ENCODE measurements at regions of chr11 and their contacts with region 1.

Region 1: DNA sequence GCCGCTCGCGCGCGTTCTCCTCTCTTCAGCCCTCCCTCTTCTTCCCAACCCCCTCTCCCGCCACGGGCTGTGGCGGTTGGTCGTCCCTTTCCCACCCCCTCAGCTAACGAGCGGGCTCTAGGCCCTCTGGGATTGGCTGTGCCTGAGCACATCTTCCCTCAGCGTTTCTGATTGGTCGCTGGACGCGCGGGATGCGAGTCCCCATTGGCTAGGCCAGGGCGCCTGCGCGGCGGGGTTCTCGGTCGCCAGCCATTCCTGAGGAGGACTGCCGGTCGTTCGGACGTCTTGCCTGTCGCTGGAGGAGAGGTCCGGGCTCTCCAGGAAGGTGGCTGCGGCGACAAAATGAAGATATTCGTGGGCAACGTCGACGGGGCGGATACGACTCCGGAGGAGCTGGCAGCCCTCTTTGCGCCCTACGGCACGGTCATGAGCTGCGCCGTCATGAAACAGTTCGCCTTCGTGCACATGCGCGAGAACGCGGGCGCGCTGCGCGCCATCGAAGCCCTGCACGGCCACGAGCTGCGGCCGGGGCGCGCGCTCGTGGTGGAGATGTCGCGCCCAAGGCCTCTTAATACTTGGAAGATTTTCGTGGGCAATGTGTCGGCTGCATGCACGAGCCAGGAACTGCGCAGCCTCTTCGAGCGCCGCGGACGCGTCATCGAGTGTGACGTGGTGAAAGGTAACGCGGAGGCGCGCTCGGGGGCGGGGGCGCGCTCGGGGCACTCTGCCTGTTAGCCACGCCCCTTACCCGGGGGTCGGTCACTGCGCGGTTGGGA is at the start of gene RBM14:
- DNase-seq: peak; percentile 99
- H3K4me3 Mint-ChIP-seq: peak within 1 kb of the TSS; percentile 98
- H3K27ac Mint-ChIP-seq: peak within 1 kb of the TSS; percentile 98
- H3K4me1 Mint-ChIP-seq: peaks cover 36% of the 10 kb centered on the region
- H3K27me3 Mint-ChIP-seq: no peaks in the 10 kb centered on the region
- total RNA-seq, gene RBM14: 160 to 173 TPM

Region 2: DNA sequence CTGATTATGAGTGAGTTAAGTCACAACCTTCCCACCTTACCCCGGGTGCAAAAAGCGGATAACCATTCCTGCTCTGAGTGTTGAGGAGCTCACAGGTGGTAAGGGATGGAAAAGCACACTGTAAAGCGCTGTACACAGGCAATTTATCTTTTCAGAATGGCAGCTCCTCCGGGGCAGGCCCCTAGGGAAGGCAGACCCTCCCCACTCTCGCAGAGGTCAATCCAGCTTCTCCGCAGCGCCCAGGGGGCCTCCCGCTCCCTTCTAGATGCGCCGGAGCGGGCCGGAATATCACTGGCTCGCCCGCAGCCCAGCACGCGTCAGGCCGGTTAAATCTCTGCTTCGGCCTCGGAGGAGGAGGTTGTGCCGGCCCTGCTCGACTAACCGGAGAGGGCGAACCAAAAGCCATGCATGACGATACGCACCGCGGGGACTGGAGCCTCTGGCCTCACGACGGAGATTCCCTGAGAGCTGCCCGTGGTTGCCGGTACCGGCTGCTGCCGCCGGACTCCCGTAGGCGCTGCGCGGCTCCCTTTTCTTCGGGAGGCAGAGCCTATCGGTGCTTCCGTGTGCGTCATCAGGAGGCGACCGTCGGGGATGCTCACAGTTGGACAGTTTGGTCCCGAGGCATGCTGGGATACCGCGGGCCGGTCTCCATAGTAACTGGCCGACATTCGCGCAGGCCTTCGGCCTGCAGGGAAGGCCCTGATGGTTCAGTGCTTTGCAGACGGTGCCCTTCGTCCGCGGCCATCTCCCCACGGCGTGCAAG is 271.8 kb before region 1 on chr11 and contains the start of gene BRMS1:
- CTCF ChIA-PET with region 1: no interaction called
- intact Hi-C with region 1: loop called (anchors 5 kb)
- DNase-seq: peak; percentile 99
- H3K4me3 Mint-ChIP-seq: peak within 1 kb of the TSS; percentile 93
- H3K27ac Mint-ChIP-seq: peak within 1 kb of the TSS; percentile 85
- H3K4me1 Mint-ChIP-seq: peaks cover 42% of the 10 kb centered on the region
- H3K27me3 Mint-ChIP-seq: peaks cover 3% of the 10 kb centered on the region
- total RNA-seq, gene BRMS1: 24.0 to 25.3 TPM

Region 3: DNA sequence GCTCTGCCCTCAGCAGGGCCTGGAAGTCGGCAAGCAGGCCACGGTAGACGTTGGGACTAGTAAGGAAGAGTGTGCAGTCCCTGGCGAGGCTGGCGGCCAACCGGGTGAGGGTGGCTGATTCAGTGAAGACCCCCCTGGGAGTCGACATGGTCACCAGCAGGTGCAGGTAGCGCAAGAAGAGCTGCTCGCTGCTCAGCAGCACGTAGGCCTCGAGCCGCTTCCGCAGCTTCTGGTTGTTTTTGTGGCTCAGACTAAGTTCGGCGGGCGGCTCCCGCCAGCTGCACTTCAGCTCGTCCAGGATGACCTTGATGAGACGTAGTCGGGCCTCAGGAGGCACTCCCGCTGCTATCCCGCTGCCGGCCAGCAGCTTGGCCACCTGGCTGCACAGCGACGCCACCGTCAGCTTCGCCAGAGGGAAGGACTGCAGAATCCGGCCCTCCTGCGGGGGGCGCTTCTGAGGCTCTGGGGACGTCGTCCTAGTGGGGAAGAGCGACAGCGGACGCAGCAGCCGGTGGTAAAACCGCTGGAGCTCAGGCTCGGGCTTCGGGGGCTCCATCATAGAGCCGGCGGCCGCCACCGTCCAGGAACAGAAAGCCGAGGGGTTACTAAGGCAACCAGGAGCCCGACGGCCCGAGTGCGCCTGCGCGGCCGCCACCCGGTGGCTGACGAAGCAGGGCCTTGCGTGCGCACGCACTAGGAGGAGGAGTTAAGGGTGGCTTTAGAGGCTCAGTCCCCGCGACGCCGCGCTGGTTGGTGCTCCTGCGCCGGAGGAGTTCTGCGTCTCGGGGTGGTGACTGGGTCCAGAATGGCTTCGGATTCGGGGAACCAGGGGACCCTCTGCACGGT is 23.9 kb before region 1 on chr11 and contains the starts of genes CCDC87 and CCS:
- CTCF ChIA-PET with region 1: interaction called, 4 read pairs
- intact Hi-C with region 1: loop called (anchors 1 kb)
- DNase-seq: peak; percentile 98
- H3K4me3 Mint-ChIP-seq: peak within 1 kb of the TSS; percentile 100
- H3K27ac Mint-ChIP-seq: peak within 1 kb of the TSS; percentile 98
- H3K4me1 Mint-ChIP-seq: peaks cover 30% of the 10 kb centered on the region
- H3K27me3 Mint-ChIP-seq: no peaks in the 10 kb centered on the region
- total RNA-seq, gene CCDC87: 0.07 to 0.12 TPM
- total RNA-seq, gene CCS: 22.6 to 22.8 TPM

Region 4: DNA sequence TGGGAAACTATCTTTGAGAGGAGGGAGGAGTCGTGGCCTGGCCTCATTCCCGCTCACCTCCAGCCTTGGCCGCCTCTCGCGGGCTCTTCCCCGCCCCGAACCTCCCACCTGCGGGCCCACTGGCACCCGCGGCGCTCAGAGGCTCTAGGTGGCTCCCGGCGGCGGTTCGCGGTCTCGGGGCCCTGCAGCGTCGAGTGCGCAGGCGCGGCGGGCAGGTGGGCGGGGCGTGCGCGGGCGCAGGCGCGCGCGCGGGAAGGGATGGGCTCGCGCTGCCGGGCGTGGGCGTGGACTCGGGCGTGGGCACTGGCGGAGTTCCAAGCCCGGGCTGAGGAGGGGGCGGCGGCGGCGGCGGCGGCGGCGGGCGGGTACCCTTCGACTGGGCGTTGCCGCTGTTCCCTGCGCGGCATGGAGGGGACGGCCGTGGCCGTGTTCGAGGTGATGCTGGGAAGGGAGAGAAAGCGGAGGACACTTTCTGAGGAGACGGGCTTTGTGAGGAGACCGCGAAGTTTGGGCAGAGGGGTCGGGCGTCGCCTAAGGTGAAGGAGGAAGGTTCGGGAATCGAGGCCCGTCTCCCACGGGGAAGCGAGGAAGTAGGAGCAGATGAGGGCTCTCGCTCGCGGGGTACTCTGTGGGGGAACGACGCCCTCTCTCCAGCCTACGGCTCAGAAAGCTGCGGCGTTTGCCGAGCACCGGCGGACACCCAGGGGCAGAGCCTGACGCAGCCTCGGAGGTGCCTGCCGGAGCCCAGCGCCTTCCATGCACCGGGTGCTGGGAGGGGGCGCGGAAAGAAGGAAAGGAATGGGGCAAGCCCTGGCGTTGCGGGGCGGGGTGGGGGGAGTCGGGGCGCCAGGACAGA is 128.1 kb after region 1 on chr11:
- CTCF ChIA-PET with region 1: no interaction called
- intact Hi-C with region 1: loop called (anchors 2 kb)
- DNase-seq: peak; percentile 85
- H3K4me3 Mint-ChIP-seq: peak overlapping the region; percentile 95
- H3K27ac Mint-ChIP-seq: peak overlapping the region; percentile 50
- H3K4me1 Mint-ChIP-seq: peaks cover 1% of the 10 kb centered on the region
- H3K27me3 Mint-ChIP-seq: no peaks in the 10 kb centered on the region

Region 5: DNA sequence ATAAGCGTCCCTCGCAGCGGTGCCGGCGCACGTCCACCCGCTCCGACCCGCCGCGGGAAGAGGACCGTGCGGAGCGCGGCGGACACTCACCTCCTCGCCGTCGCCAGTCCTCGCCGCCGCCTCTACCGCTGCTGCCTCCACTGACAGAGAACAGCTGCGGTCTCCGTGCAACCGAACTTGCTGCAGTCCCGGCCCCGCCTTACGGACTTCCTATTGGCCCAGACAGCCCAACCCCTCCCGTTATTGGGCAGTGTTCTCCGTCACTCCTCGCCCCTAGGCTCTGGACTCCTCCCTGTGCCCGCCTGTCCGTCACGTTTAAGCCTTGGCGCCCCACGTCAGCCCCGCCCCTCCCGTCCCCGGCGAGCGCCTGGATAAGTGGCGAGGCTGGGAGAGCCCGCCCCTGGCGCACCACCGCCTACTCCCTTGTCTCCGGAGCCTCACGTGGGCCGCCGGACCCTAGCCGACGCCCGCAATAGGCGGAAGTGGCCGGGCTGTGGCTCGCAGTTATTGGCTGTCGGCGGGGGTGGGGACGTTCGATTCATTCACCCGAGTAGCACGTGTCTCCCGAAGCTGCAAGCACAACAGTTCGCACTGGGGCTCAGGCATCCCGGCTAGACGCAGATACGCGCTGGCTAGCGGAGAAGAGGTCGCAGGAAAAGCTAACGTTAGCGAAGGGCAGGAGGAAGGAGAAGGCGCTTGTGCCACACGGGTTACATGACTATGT is 341.8 kb after region 1 on chr11 and contains the start of gene PC:
- CTCF ChIA-PET with region 1: no interaction called
- intact Hi-C with region 1: loop called (anchors 10 kb)
- DNase-seq: peak; percentile 99
- H3K4me3 Mint-ChIP-seq: peak within 1 kb of the TSS; percentile 83
- H3K27ac Mint-ChIP-seq: peak within 1 kb of the TSS; percentile 17
- H3K4me1 Mint-ChIP-seq: peaks cover 16% of the 10 kb centered on the region
- H3K27me3 Mint-ChIP-seq: no peaks in the 10 kb centered on the region
- total RNA-seq, gene PC: 8.0 to 9.4 TPM